Breast epithelium (tissue), 4 donors: ENCODE measurements at regions of chr1 and their contacts with region 1.

Region 1: GRCh38 chr1:172826096-172826743 is 167.3 kb downstream of the FASLG start:
- DNase-seq: no peak
- H3K4me3 ChIP-seq: peak overlapping the region; percentile 7 to 42 (median 21)
- H3K27ac ChIP-seq: peak overlapping the region; percentile 64 to 74
- H3K4me1 ChIP-seq: no peaks in the 10 kb centered on the region
- H3K27me3 ChIP-seq: no peaks in the 10 kb centered on the region
- CTCF ChIP-seq: peak; percentile 39 to 68 (median 55)
- POLR2A ChIP-seq: no peak

Region 2: DNA sequence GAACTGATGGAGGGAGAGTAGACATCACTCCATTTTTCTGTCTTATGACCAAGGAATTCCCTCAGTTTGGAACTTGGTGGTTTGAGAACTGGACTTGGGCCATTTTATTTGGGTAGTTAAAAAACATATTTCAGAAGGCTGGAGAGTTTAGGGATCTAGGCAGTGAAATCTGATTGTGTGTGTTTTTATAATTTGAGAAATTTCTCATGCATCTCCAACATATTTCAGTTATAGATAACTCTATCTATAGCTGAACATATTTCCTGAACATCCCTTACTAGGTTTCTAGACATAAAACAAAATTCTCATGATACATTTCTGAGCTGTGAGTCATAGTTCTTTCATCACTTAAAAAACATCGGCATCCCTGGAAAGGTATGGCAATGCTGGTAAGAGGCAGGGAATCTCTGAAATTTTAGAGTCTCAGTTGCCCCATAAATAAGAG is 64.6 kb before region 1 on chr1:
- intact Hi-C with region 1: no loop called
- DNase-seq: no peak
- H3K4me3 ChIP-seq: no peak overlapping the region
- H3K27ac ChIP-seq: no peak overlapping the region
- H3K4me1 ChIP-seq: no peaks in the 10 kb centered on the region
- H3K27me3 ChIP-seq: no peaks in the 10 kb centered on the region
- CTCF ChIP-seq: no peak
- POLR2A ChIP-seq: no peak

Region 3: DNA sequence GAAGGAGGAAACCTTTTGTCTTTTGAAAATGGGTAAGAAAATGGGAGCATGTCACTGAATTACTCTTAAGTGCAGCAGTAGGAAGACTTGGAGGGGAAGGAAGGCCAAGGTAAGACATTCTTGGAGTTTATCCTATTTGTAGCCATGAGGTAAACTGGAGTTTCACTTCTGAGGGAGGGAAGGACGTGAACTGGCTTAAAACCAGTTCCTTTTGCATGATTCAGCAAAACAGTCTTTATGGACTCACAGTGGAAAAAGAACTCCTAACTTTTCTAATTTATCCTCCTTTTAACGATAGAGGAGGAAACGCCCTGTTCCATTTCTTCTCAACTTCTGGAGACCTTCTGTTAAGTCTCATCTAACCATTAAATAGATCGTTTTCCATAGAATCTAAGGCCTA is 653.4 kb after region 1 on chr1:
- intact Hi-C with region 1: loop called (anchors 5 kb)
- DNase-seq: no peak
- H3K4me3 ChIP-seq: peak overlapping the region in 2 of 3 donors; percentile 83 to 91
- H3K27ac ChIP-seq: no peak overlapping the region
- H3K4me1 ChIP-seq: peaks cover 0 to 13% of the 10 kb centered on the region in 2 donors
- H3K27me3 ChIP-seq: no peaks in the 10 kb centered on the region
- CTCF ChIP-seq: no peak
- POLR2A ChIP-seq: no peak

Region 4: DNA sequence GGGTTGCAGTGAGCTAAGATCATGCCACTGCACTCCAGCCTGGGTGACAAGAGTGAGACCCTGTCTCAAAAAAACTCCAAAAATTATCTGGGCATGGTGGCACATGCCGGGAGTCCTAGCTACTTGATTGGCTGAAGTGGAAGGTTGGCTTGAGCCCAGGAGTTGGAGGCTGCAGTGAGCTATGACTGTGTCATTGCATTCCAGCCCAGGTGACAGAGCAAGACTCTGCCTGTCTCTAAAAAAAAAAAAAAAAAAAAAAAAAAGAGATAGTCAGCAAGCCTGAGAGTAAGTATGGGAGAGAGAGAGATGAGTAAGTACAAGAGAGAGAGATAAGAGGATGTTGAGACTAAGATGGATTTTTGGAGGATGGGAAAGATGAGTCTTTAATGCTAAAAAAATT is 1992.7 kb after region 1 on chr1:
- intact Hi-C with region 1: no loop called
- DNase-seq: no peak
- H3K4me3 ChIP-seq: no peak overlapping the region
- H3K27ac ChIP-seq: no peak overlapping the region
- H3K4me1 ChIP-seq: no peaks in the 10 kb centered on the region
- H3K27me3 ChIP-seq: no peaks in the 10 kb centered on the region
- CTCF ChIP-seq: no peak
- POLR2A ChIP-seq: no peak